Activated CD8-positive, alpha-beta T cell treated with anti-CD3 and anti-CD28 coated beads for 36 hours (primary cell): ENCODE measurements at regions of chr11 and their contacts with region 1.

Region 1: GRCh38 chr11:73661035-73661628 is 14.8 kb downstream of the PLEKHB1 start:
- DNase-seq: peak; percentile 87
- ATAC-seq: peak; percentile 94
- H3K4me3 Mint-ChIP-seq: peak overlapping the region; percentile 29
- H3K27ac Mint-ChIP-seq: no peak overlapping the region
- H3K4me1 Mint-ChIP-seq: no peaks in the 10 kb centered on the region
- H3K27me3 Mint-ChIP-seq: no peaks in the 10 kb centered on the region
- CTCF ChIP-seq: peak; percentile 99

Region 2: DNA sequence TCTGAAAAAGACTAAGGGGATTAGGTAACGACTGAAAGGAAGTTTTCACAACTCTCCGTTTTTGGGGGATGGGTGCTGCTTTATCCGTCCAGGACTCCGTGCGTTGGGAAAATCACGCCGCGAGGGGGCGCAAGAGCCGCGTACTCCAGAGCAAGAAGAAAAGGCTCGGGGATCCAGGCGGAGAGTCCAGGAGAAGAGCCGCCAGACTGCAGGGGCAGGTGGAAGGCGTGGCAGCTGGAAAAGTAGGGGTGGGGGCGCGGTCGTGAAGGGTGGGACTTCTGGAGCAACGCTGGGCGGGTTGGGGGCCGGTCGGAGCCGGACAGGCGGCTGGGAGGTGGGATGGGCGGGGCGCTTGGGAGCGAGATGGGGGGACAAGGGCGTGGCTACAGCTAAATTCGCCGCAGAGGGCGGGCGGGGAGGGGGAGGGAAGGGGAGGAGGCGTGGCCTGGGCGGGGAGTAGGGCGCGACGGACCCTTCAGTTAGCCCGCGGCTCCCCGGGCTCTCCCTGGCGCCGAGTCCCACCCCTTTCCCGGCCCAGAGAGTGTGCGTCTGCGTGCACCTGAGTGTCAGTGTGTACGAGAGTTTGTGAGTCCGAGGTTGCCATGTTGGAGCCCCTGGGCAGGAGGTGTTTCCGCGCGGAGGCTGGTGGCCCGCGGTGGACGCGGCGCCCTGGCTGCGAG is 353.7 kb before region 1 on chr11:
- CTCF ChIA-PET with region 1: interaction called, 23 read pairs
- POLR2A ChIA-PET with region 1: no interaction called
- intact Hi-C with region 1: no loop called
- DNase-seq: peak; percentile 97
- ATAC-seq: peak; percentile 81
- H3K4me3 Mint-ChIP-seq: peak overlapping the region; percentile 78
- H3K27ac Mint-ChIP-seq: no peak overlapping the region
- H3K4me1 Mint-ChIP-seq: peaks cover 6% of the 10 kb centered on the region
- H3K27me3 Mint-ChIP-seq: peaks cover 16% of the 10 kb centered on the region
- CTCF ChIP-seq: peak; percentile 62

Region 3: DNA sequence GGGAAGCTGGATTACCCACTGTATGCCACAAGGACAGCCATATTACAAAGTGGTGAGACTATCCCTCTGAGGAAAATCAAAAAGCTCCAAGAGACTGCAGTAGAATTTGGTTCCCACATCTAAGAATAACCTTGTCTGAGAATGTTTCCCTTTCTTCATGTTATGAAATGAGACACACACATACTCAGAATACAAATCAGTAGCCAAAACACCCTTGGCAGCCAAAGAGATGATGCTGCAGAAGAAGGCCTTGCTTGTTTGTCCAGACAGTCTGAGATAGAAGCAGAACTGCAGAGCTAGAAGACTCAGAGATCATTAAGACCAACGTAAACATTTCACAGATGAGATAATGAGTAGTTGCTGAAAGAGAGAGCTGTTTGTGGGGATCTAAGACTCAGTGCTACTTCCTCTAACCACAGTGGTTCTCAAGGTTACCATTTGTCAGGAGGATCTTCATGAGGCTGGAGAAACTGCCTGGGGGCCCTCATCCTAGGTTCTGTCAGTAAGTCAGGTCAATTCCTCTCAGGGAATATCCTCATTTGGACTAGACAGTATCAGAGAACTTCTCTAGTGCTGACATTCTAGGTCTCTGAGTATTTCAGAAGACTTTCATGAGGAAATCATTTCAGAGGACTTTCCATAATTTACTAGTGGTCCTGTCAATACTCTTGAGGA is 246.0 kb before region 1 on chr11:
- CTCF ChIA-PET with region 1: interaction called, 14 read pairs
- POLR2A ChIA-PET with region 1: no interaction called
- intact Hi-C with region 1: no loop called
- DNase-seq: no peak
- ATAC-seq: peak; percentile 10
- H3K4me3 Mint-ChIP-seq: no peak overlapping the region
- H3K27ac Mint-ChIP-seq: no peak overlapping the region
- H3K4me1 Mint-ChIP-seq: peaks cover 3% of the 10 kb centered on the region
- H3K27me3 Mint-ChIP-seq: no peaks in the 10 kb centered on the region
- CTCF ChIP-seq: no peak

Region 4: DNA sequence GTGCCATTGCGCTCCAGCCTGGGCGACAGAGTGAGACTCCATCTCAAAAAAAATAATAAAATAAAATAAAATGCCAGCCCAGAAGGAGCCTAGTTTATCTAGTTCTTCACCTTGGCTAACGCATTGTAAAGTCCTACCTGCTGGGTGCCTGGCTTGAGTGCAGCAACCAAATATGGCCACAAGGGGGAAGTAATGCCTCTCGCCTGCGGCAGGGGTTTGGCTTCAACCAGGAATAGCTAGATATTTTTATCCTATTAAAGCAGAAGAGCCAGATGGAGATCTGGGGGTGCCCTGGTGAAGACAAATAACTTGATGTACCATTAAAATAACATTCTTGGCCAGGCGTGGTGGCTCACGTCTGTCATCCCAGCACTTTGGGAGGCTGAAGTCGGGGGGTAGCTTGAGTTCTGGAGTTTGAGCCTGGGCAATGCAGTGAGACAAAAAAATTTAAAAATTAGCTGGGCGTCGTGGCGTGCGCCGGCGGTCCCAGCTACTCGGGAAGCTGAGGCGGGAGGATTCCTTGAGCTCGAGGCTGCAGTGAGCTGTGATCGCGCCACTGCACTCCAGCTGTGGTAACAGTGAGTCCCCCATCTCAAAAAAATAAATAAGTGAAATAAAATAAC is 35.3 kb before region 1 on chr11:
- CTCF ChIA-PET with region 1: interaction called, 198 read pairs
- POLR2A ChIA-PET with region 1: interaction called, 14 read pairs
- intact Hi-C with region 1: loop called (anchors 2 kb)
- DNase-seq: peak; percentile 78
- ATAC-seq: peak; percentile 94
- H3K4me3 Mint-ChIP-seq: no peak overlapping the region
- H3K27ac Mint-ChIP-seq: no peak overlapping the region
- H3K4me1 Mint-ChIP-seq: no peaks in the 10 kb centered on the region
- H3K27me3 Mint-ChIP-seq: peaks cover 8% of the 10 kb centered on the region
- CTCF ChIP-seq: peak; percentile 91

Region 5: DNA sequence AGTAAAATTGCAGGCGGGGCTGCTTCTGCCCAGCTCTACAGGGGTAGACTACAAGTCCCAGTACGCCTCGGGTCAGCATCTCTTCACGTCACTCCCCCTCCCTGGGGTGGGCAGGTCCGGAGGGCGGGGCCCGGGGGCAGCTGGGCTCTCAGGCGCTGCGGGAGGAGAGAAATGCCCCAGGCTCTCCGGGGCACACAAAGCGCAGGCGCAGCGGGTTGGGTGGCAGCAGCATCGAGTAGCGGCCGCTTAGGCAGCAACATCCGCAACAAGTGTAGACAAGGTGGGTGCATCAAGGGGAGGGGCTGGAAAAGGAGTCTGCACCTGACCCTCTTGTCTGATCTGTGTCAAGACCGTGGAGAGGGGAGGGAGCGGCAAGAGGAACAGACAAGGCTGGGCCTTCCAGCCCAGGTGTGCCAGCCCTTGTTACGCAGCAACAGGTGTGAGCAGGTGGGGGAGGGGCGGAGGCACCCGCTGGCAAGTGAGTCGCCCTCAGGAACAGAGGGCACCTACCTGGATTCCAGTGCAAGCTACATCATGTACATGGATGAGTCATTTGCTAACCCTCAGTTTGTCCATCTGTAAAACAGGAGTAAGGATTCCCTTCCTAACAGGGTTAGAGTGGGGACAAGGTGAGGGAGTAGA is 13.6 kb before region 1 on chr11:
- CTCF ChIA-PET with region 1: interaction called, 56 read pairs
- POLR2A ChIA-PET with region 1: interaction called, 10 read pairs
- intact Hi-C with region 1: no loop called
- DNase-seq: peak; percentile 97
- ATAC-seq: peak; percentile 100
- H3K4me3 Mint-ChIP-seq: peak overlapping the region; percentile 80
- H3K27ac Mint-ChIP-seq: peak overlapping the region; percentile 68
- H3K4me1 Mint-ChIP-seq: peaks cover 12% of the 10 kb centered on the region
- H3K27me3 Mint-ChIP-seq: no peaks in the 10 kb centered on the region
- CTCF ChIP-seq: no peak